ENCODE measurements at regions of chr5 and their contacts with region 1.

Region 1: DNA sequence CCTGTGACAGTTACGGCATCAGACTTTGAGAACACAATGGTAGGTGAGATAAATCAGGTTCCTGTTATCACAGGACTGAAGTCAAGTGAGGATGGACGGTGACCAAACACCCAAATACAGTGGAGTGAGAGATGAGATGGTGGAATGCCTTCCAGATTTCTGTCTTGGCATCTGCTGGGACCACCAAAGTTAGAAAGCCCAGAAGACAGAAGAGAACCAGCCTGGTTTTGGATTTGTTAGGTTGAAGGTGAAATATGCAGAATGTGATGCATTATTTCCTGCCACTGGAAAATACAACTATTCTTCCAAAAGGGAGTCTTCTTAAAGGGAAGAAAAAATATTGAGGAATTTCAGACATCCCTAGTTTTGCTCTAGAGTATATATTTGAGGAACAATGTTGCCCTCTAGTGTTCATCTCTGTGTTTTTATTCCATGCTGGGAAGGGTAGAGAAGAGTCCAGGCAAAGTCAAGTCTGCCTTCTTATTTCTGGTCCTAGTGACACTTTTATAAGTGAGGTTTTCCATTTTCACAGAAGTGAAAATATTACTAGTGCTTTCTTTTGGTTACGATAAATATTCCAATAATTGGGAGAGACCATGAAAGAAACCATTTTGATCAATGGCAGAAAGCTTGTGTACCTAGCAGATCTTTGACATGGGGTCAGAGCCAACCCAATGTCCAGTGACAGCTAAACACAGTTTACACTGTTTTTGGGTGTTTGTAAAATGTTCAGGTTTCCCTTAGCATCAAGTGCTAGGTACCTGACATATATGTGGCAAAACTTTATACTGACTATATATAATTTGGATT is 142.3 kb upstream of the ANKH start:
- DNase-seq: peak; percentile 54
- H3K4me3 ChIP-seq: no peak overlapping the region
- H3K27ac ChIP-seq: no peak overlapping the region
- H3K4me1 ChIP-seq: peaks cover 9% of the 10 kb centered on the region
- H3K27me3 ChIP-seq: no peaks in the 10 kb centered on the region
- CTCF ChIP-seq: peak; percentile 54 to 62

Region 2: GRCh38 chr5:13976867-13977830 is 1036.7 kb before region 1 on chr5:
- CTCF ChIA-PET with region 1: no interaction called
- dilution Hi-C with region 1: no loop called
- in situ Hi-C with region 1: no loop called
- intact Hi-C with region 1: loop called (anchors 5 kb)
- DNase-seq: peak; percentile 53
- H3K4me3 ChIP-seq: no peak overlapping the region
- H3K27ac ChIP-seq: no peak overlapping the region
- H3K4me1 ChIP-seq: no peaks in the 10 kb centered on the region
- H3K27me3 ChIP-seq: no peaks in the 10 kb centered on the region
- CTCF ChIP-seq: peak; percentile 47 to 68

Region 3: DNA sequence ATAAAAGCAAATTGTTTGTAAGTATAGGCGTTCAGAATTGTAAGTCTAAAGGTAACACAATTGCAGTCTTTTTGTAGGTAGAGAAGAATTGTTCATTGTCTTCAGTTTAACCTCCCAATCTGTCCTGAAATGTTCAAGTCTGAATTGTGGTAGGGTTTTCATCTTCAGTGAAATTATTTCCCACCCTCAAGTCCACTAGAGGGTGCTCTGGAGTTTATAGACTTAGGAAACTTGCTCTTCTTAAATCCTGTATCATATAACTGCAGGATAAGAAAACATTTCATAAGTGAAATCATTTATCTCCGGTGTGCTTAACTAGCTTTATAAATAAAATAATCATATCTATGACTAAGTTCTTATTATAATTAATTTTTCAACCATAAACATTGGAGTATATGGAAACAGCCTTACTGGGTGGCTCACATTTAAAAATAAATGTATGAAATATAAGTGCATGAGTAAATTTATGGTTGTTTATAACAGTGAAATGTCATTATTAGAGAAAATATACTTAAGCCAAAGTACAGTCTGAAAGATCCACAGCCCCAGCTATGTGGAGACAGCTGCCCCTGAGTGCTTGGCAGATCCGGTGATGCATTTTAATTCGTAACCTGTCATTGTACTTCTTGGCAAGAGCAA is 614.7 kb before region 1 on chr5:
- CTCF ChIA-PET with region 1: no interaction called
- dilution Hi-C with region 1: no loop called
- in situ Hi-C with region 1: loop called (anchors 25 kb)
- intact Hi-C with region 1: loop called (anchors 1 kb)
- DNase-seq: peak; percentile 31
- H3K4me3 ChIP-seq: no peak overlapping the region
- H3K27ac ChIP-seq: no peak overlapping the region
- H3K4me1 ChIP-seq: peaks cover 31% of the 10 kb centered on the region
- H3K27me3 ChIP-seq: no peaks in the 10 kb centered on the region
- CTCF ChIP-seq: peak; percentile 66 to 70

Region 4: DNA sequence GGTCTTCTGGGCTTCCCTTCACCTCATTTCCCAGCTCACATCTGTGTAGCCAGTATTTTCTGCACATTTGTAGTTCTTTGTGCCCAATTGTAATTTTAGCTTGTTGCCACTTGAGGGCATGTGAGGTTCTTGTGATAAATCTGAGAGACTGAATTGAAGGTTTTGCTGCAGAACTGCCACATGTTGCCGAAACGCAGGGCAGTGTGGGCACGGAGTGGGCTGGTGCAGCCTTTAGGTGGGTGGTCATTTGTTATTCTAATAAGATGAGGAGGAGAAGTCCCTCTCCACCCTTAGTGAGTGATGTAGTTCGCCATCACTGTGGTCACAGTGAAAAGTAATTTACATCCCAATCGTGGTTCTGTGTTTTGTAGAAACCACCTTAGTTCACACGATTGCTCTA is 328.1 kb before region 1 on chr5:
- CTCF ChIA-PET with region 1: no interaction called
- dilution Hi-C with region 1: no loop called
- in situ Hi-C with region 1: no loop called
- intact Hi-C with region 1: loop called (anchors 1 kb)
- DNase-seq: peak; percentile 53
- H3K4me3 ChIP-seq: no peak overlapping the region
- H3K27ac ChIP-seq: peak overlapping the region; percentile 30
- H3K4me1 ChIP-seq: peaks cover 20% of the 10 kb centered on the region
- H3K27me3 ChIP-seq: no peaks in the 10 kb centered on the region
- CTCF ChIP-seq: peak; percentile 52 to 74

Region 5: DNA sequence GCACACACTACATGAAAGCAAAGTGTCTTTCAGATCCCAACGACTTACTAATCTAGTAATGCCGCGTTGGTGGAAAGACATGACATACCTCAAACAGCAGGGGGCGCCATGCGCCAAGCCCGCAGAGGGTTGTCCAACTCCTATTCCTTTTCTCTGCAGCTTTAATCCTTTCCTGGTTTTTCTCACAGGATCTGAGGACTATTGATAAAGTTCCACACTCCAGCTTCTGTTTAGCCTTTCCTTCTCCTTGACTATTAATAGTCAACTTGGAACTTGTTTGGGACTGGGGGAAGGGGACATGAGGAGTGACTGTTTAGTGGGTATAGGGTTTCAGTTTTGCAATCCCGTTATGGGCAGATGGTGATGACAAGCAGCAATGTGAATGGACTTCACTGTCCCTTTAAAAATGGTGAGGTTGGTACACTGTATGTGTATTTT is 286.4 kb before region 1 on chr5:
- CTCF ChIA-PET with region 1: no interaction called
- dilution Hi-C with region 1: no loop called
- in situ Hi-C with region 1: loop called in 1 of 2 experiments (anchors 5 kb)
- intact Hi-C with region 1: loop called (anchors 1 kb)
- DNase-seq: peak; percentile 58
- H3K4me3 ChIP-seq: no peak overlapping the region
- H3K27ac ChIP-seq: no peak overlapping the region
- H3K4me1 ChIP-seq: no peaks in the 10 kb centered on the region
- H3K27me3 ChIP-seq: no peaks in the 10 kb centered on the region
- CTCF ChIP-seq: peak; percentile 94 to 95

Region 6: GRCh38 chr5:14977058-14977685 is 36.7 kb before region 1 on chr5:
- CTCF ChIA-PET with region 1: no interaction called
- dilution Hi-C with region 1: no loop called
- in situ Hi-C with region 1: no loop called
- intact Hi-C with region 1: no loop called
- DNase-seq: peak; percentile 65
- H3K4me3 ChIP-seq: no peak overlapping the region
- H3K27ac ChIP-seq: peak overlapping the region; percentile 12
- H3K4me1 ChIP-seq: peaks cover 11% of the 10 kb centered on the region
- H3K27me3 ChIP-seq: no peaks in the 10 kb centered on the region
- CTCF ChIP-seq: no peak

Region 7: GRCh38 chr5:15191012-15191411 is 177.2 kb after region 1 on chr5:
- CTCF ChIA-PET with region 1: no interaction called
- dilution Hi-C with region 1: no loop called
- in situ Hi-C with region 1: no loop called
- intact Hi-C with region 1: no loop called
- DNase-seq: no peak
- H3K4me3 ChIP-seq: no peak overlapping the region
- H3K27ac ChIP-seq: no peak overlapping the region
- H3K4me1 ChIP-seq: no peaks in the 10 kb centered on the region
- H3K27me3 ChIP-seq: no peaks in the 10 kb centered on the region
- CTCF ChIP-seq: peak in 1 of 2 donors; percentile 10

Measured in mammary epithelial cell (primary cell).